CD4-positive, alpha-beta memory T cell (primary cell): ENCODE measurements at regions of chr7 and their contacts with region 1.

Region 1: GRCh38 chr7:143416565-143417149 is 8.0 kb upstream of the EPHA1 start:
- DNase-seq: peak in 4 of 5 donors; percentile 47 to 62 (median 53)
- H3K4me3 ChIP-seq: no peak overlapping the region
- H3K4me3 Mint-ChIP-seq: no peak overlapping the region
- H3K27ac ChIP-seq: no peak overlapping the region
- H3K27ac Mint-ChIP-seq: no peak overlapping the region
- H3K4me1 ChIP-seq: no peaks in the 10 kb centered on the region
- H3K4me1 Mint-ChIP-seq: peaks cover 0 to 9% (median 8%) of the 10 kb centered on the region in 4 donors
- H3K27me3 ChIP-seq: no peaks in the 10 kb centered on the region
- H3K27me3 Mint-ChIP-seq: no peaks in the 10 kb centered on the region

Region 2: GRCh38 chr7:143385891-143386781 is 30.5 kb before region 1 on chr7:
- CTCF ChIA-PET with region 1: interaction called, 18 read pairs
- POLR2A ChIA-PET with region 1: interaction called, 5 read pairs
- intact Hi-C with region 1: loop called (anchors 2 kb)
- DNase-seq: peak; percentile 47 to 74 (median 56)
- H3K4me3 ChIP-seq: peak overlapping the region in 1 of 2 donors; percentile 46
- H3K4me3 Mint-ChIP-seq: no peak overlapping the region
- H3K27ac ChIP-seq: peak overlapping the region; percentile 49
- H3K27ac Mint-ChIP-seq: no peak overlapping the region
- H3K4me1 ChIP-seq: peaks cover 55% of the 10 kb centered on the region
- H3K4me1 Mint-ChIP-seq: peaks cover 5 to 16% (median 11%) of the 10 kb centered on the region in 4 donors
- H3K27me3 ChIP-seq: no peaks in the 10 kb centered on the region
- H3K27me3 Mint-ChIP-seq: no peaks in the 10 kb centered on the region